Left cardiac atrium (tissue), 4 donors: ENCODE measurements at regions of chr18 and their contacts with region 1.

Region 1: GRCh38 chr18:24726727-24727492 is 266.5 kb downstream of the HRH4 start:
- DNase-seq: peak; percentile 68
- ATAC-seq: peak; percentile 70 to 79

Region 2: DNA sequence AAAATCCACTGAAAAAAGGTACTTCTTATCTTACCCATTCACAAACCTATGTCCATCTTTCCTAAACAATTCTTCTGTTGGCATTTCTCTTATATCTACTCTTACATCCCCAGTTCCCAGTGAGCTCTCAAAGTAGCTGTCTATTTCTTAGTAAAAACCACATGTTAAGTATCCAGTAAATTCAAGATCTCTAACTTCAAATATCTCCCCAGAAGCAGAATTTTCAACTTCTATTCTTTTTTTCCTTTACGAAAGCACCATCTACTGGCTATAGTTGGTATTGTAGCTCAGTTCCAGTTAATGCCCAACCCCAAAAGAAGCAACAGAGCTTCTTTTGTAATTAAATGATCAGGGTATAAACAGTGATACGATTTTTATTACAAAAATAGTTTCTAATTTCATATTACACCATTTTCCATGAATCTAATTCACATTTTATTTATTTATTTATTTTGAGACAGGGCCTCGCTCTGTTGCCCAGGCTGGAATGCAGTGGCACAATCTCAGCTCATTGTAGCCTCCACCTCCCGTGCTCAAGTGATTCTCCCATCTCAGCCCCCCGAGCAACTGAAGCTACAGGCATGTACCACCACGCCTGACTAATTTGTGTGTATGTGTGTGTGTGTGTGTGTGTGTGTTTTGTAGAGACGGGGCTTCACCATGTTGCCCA is 238.0 kb before region 1 on chr18:
- intact Hi-C with region 1: loop called (anchors 5 to 10 kb)
- DNase-seq: no peak
- ATAC-seq: peak in 1 of 2 donors; percentile 53

Region 3: GRCh38 chr18:24543805-24544498 is 183.0 kb before region 1 on chr18:
- intact Hi-C with region 1: loop called in 1 of 2 experiments (anchors 2 kb)
- DNase-seq: no peak
- ATAC-seq: no peak

Region 4: DNA sequence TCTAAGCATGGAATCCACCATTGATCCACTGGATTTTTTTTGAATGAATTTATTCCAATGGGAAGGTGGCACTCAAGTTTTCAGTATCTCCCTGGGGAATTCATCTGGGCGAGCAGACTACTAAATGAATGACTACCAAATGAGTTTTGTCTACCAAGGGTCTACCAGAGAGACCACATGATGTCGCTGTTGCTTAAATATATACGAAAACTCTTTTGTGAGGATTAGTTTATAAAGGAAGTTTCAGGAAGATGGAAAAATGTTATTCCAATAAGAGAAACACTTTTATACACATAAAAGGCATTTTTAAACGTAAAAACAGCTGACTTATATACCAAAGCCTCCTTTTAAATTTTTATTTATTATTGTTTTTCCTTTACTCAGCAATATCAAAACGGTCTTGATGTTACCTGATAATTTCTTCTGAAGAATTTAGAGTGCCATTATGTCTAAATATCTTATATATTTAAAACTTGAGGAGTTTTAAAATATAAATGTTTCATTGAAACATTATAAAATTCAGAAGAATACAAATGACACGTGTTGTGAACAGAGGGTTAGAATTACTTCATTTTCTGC is 126.7 kb before region 1 on chr18:
- intact Hi-C with region 1: loop called (anchors 1 to 2 kb)
- DNase-seq: no peak
- ATAC-seq: no peak

Region 5: GRCh38 chr18:24791751-24792560 is 65.0 kb after region 1 on chr18:
- intact Hi-C with region 1: no loop called
- DNase-seq: no peak
- ATAC-seq: no peak